GM12878 (cell line): ENCODE measurements at regions of chr19 and their contacts with region 1.

Region 1: GRCh38 chr19:10279737-10280442 is 6.9 kb upstream of the ICAM4 start:
- DNase-seq: no peak
- ATAC-seq: peak; percentile 30
- H3K4me3 ChIP-seq: peak overlapping the region; percentile 47; the same call in 1 of the 2 replicates
- H3K27ac ChIP-seq: no peak overlapping the region
- H3K4me1 ChIP-seq: peaks cover 11% of the 10 kb centered on the region
- H3K27me3 ChIP-seq: no peaks in the 10 kb centered on the region
- CTCF ChIP-seq: no peak
- EP300 ChIP-seq: no peak
- POLR2A ChIP-seq: peak; percentile 32; the same call in 1 of the 2 replicates
- RAD21 ChIP-seq: no peak

Region 2: DNA sequence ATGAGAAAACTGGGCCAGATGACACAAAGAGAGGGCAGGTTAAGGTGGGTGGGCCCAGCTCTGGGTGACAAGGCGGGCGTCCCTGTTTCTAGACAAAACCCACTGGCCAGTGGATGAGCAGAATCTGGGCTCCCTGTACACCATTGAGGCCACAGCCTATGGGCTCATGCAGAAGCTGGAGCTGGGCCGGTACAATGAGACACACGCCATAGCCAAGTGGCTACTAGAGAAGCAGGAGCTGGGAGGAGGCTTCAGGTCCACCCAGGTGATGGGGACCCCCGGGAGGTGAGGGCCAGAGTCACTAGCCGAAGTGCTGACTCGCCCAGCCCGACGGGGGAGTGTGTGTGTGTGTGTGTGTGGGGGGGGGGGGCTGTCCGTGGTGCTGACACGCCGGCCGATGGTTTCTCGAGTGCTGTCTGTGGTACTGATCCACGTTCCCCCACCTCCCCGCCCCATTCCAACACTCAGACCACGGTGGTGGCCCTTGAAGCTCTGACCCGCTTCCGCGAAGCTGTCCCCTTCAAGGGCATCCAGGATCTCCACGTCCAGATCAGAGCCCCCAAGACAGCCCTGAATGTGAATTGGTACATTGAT is 218.1 kb before region 1 on chr19:
- CTCF ChIA-PET with region 1: no interaction called
- POLR2A ChIA-PET with region 1: interaction called, 12 read pairs
- RAD21 ChIA-PET with region 1: no interaction called
- SMC1A ChIA-PET with region 1: no interaction called
- in situ Hi-C with region 1: no loop called
- intact Hi-C with region 1: no loop called
- DNase-seq: no peak
- ATAC-seq: no peak
- H3K4me3 ChIP-seq: no peak overlapping the region
- H3K27ac ChIP-seq: no peak overlapping the region
- H3K4me1 ChIP-seq: no peaks in the 10 kb centered on the region
- H3K27me3 ChIP-seq: no peaks in the 10 kb centered on the region; a peak in 1 of 4 replicates
- CTCF ChIP-seq: no peak
- EP300 ChIP-seq: no peak
- POLR2A ChIP-seq: no peak
- RAD21 ChIP-seq: no peak